ENCODE measurements at regions of chr3 and their contacts with region 1.

Region 1: GRCh38 chr3:127750226-127751031 is 71.9 kb downstream of the MGLL start:
- DNase-seq: peak; percentile 32
- ATAC-seq: no peak
- H3K4me3 ChIP-seq: no peak overlapping the region
- H3K4me3 Mint-ChIP-seq: peak overlapping the region; percentile 46
- H3K27ac ChIP-seq: no peak overlapping the region
- H3K27ac Mint-ChIP-seq: peak overlapping the region; percentile 43
- H3K4me1 ChIP-seq: peaks cover 27 to 36% of the 10 kb centered on the region in 2 donors
- H3K4me1 Mint-ChIP-seq: peaks cover 53% of the 10 kb centered on the region
- H3K27me3 ChIP-seq: no peaks in the 10 kb centered on the region
- H3K27me3 Mint-ChIP-seq: no peaks in the 10 kb centered on the region
- CTCF ChIP-seq: no peak

Region 2: DNA sequence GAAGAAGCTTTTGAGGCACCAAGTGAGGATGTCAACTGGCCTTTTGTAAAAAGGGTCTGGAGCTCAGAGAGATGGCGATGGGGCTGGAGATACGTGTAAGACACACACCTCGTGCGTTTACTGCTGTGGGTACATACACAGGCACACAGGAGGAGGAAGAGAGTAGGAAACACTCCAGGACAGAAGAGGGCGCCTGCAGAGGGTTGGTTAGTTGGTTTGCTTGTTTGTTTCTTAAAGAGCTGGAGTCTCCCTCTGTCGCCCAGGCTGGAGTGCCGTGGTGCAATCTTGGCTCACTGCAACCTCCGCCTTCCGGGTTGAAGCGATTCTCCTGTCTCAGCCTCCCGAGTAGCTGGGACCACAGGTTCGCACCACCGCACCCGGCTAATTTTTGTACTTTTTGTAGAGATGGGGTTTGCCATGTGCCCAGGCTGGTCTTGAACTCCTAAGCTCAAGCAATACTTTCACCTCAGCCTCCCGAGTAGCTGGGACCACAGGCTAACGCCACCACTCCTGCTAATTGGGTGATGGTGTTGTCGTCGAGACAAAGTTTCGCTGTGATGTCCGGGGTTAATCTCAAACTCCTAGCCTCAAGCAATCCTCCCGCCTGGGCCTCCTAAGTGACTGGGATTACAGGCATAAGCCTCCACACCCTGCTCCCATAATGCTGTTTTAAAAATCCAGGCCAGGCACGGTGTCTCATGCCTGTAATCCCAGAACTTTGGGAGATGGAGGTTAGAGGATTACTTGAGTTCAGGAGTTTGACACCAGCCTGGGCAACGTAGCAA is 461.3 kb before region 1 on chr3:
- CTCF ChIA-PET with region 1: no interaction called
- POLR2A ChIA-PET with region 1: no interaction called
- intact Hi-C with region 1: no loop called
- DNase-seq: no peak
- ATAC-seq: no peak
- H3K4me3 ChIP-seq: no peak overlapping the region
- H3K4me3 Mint-ChIP-seq: no peak overlapping the region
- H3K27ac ChIP-seq: no peak overlapping the region
- H3K27ac Mint-ChIP-seq: no peak overlapping the region
- H3K4me1 ChIP-seq: no peaks in the 10 kb centered on the region
- H3K4me1 Mint-ChIP-seq: no peaks in the 10 kb centered on the region
- H3K27me3 ChIP-seq: no peaks in the 10 kb centered on the region
- H3K27me3 Mint-ChIP-seq: no peaks in the 10 kb centered on the region
- CTCF ChIP-seq: no peak

Region 3: GRCh38 chr3:127735767-127736704 is 14.4 kb before region 1 on chr3:
- CTCF ChIA-PET with region 1: interaction called, 5 read pairs
- POLR2A ChIA-PET with region 1: no interaction called
- intact Hi-C with region 1: loop called (anchors 1 kb)
- DNase-seq: peak; percentile 66
- ATAC-seq: peak; percentile 75
- H3K4me3 ChIP-seq: peak overlapping the region; percentile 5 to 43 (median 30)
- H3K4me3 Mint-ChIP-seq: peak overlapping the region; percentile 82
- H3K27ac ChIP-seq: peak overlapping the region; percentile 49 to 71
- H3K27ac Mint-ChIP-seq: peak overlapping the region; percentile 87
- H3K4me1 ChIP-seq: peaks cover 33 to 48% of the 10 kb centered on the region in 2 donors
- H3K4me1 Mint-ChIP-seq: peaks cover 36% of the 10 kb centered on the region
- H3K27me3 ChIP-seq: no peaks in the 10 kb centered on the region
- H3K27me3 Mint-ChIP-seq: no peaks in the 10 kb centered on the region
- CTCF ChIP-seq: no peak

Region 4: DNA sequence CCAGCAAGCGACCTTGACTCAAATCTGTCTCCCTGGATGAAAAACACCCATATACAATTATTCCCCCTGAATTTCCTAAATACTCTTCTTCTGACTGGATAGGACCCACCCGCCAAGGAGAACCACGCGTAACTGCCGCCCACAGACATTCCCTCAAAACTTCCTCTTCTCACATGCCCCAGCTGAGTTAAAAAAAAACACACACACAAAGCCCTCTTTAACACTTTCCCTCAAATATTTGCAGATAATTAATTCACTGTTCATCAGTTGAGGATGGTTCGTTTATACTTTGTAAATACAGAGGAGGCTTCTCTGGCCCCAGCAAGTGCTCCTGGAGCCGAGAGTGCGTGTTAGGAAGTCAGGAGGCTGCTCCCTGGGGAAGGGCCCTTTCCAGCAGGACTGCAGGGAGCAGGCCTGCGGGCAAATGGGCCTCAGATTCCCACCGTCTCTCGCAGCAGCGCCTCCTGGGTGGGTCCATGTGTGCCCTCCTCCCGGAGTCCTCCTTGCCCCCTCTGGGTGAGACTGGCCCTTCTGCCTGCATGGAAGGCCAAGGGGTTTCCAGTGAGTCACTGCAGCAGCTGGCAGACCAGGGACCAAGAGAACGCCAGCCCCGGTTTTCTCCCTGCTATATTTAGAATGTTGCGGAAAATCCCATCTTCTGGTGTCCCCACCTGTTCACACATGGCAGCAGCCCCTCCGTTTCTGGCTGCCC is 25.1 kb after region 1 on chr3:
- CTCF ChIA-PET with region 1: no interaction called
- POLR2A ChIA-PET with region 1: no interaction called
- intact Hi-C with region 1: no loop called
- DNase-seq: peak; percentile 30
- ATAC-seq: peak; percentile 41
- H3K4me3 ChIP-seq: no peak overlapping the region
- H3K4me3 Mint-ChIP-seq: peak overlapping the region; percentile 41
- H3K27ac ChIP-seq: no peak overlapping the region
- H3K27ac Mint-ChIP-seq: no peak overlapping the region
- H3K4me1 ChIP-seq: peaks cover 13 to 17% of the 10 kb centered on the region in 2 donors
- H3K4me1 Mint-ChIP-seq: peaks cover 25% of the 10 kb centered on the region
- H3K27me3 ChIP-seq: no peaks in the 10 kb centered on the region
- H3K27me3 Mint-ChIP-seq: no peaks in the 10 kb centered on the region
- CTCF ChIP-seq: no peak

Region 5: GRCh38 chr3:127822698-127823425 is 72.4 kb after region 1 on chr3:
- CTCF ChIA-PET with region 1: no interaction called
- POLR2A ChIA-PET with region 1: no interaction called
- intact Hi-C with region 1: loop called (anchors 5 kb)
- DNase-seq: peak; percentile 55
- ATAC-seq: peak; percentile 72
- H3K4me3 ChIP-seq: peak overlapping the region; percentile 41 to 54 (median 48)
- H3K4me3 Mint-ChIP-seq: peak overlapping the region; percentile 90
- H3K27ac ChIP-seq: no peak overlapping the region
- H3K27ac Mint-ChIP-seq: peak overlapping the region; percentile 83
- H3K4me1 ChIP-seq: peaks cover 14 to 21% of the 10 kb centered on the region in 2 donors
- H3K4me1 Mint-ChIP-seq: peaks cover 21% of the 10 kb centered on the region
- H3K27me3 ChIP-seq: peaks cover 0 to 19% (median 6%) of the 10 kb centered on the region in 4 experiments
- H3K27me3 Mint-ChIP-seq: peaks cover 17% of the 10 kb centered on the region
- CTCF ChIP-seq: no peak

Region 6: DNA sequence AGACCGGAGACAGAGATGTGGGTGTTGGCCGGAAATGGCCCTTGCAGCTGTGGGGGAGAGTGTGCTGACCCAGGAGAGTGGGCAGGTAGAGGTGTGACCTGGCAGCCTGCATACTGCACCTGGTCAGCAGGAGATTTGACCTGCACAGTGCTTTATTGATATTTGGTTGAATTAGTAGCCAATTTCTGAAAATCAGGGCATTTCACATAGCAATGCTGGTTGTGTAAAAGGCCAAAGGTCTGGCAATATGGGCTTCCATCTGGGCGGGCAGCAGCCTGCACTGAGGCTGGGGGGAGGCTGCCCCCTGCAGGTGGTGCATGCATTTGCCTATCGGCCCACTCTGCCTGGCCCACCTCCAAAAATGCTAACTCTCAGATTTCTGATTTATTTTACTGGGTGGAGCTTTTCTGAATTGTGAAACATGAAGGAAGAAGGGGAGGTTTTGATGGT is 81.3 kb after region 1 on chr3:
- CTCF ChIA-PET with region 1: interaction called, 3 read pairs
- POLR2A ChIA-PET with region 1: no interaction called
- intact Hi-C with region 1: loop called (anchors 5 kb)
- DNase-seq: peak; percentile 50
- ATAC-seq: peak; percentile 40
- H3K4me3 ChIP-seq: no peak overlapping the region
- H3K4me3 Mint-ChIP-seq: no peak overlapping the region
- H3K27ac ChIP-seq: no peak overlapping the region
- H3K27ac Mint-ChIP-seq: no peak overlapping the region
- H3K4me1 ChIP-seq: peaks cover 13 to 28% of the 10 kb centered on the region in 2 donors
- H3K4me1 Mint-ChIP-seq: peaks cover 26% of the 10 kb centered on the region
- H3K27me3 ChIP-seq: no peaks in the 10 kb centered on the region
- H3K27me3 Mint-ChIP-seq: no peaks in the 10 kb centered on the region
- CTCF ChIP-seq: peak; percentile 54

Measured in B cell (primary cell).